Heart right ventricle (tissue), 16 donors: ENCODE measurements at regions of chr1 and their contacts with region 1.

Region 1: GRCh38 chr1:81808760-81809159 is 8.0 kb downstream of the ADGRL2 start:
- DNase-seq: no peak
- ATAC-seq: peak in 7 of 8 donors; percentile 20 to 65 (median 52)
- H3K4me3 ChIP-seq: peak overlapping the region in 8 of 10 donors; percentile 0 to 36 (median 27)
- H3K27ac ChIP-seq: peak overlapping the region in 6 of 10 donors; percentile 11 to 59 (median 41)
- H3K4me1 ChIP-seq: peaks cover 0 to 100% (median 74%) of the 10 kb centered on the region in 9 donors
- H3K27me3 ChIP-seq: peaks cover 0 to 8% (median 0%) of the 10 kb centered on the region in 7 donors
- CTCF ChIP-seq: peak in 5 of 9 donors; percentile 13 to 47 (median 29)

Region 2: DNA sequence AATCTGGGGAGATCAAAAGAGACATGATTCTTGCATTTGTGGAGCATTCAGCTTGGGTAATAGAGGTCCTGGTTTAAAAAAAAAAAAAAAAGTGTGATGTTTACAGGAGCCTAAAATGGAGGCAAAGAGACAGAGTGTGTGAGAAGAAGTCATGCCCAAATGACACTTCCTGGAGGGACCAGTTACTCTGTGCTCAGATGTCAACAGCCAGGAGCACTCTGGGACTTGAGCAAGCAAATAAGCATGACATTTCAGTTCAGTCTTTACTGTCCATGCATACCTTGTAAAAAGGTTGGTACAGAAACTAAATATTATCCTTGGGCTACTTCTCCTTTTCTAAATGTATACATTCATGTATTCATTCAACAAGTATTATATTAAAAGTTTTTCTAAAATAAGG is 33.2 kb before region 1 on chr1:
- intact Hi-C with region 1: no loop called
- DNase-seq: no peak
- ATAC-seq: no peak
- H3K4me3 ChIP-seq: no peak overlapping the region
- H3K27ac ChIP-seq: no peak overlapping the region
- H3K4me1 ChIP-seq: no peaks in the 10 kb centered on the region
- H3K27me3 ChIP-seq: no peaks in the 10 kb centered on the region
- CTCF ChIP-seq: no peak

Region 3: GRCh38 chr1:81937791-81938450 is 129.2 kb after region 1 on chr1:
- intact Hi-C with region 1: loop called in 2 of 10 experiments (anchors 5 to 10 kb)
- DNase-seq: no peak
- ATAC-seq: peak in 4 of 8 donors; percentile 49 to 84 (median 62)
- H3K4me3 ChIP-seq: no peak overlapping the region
- H3K27ac ChIP-seq: peak overlapping the region in 2 of 10 donors; percentile 7 to 18
- H3K4me1 ChIP-seq: peaks cover 0 to 29% (median 17%) of the 10 kb centered on the region in 9 donors
- H3K27me3 ChIP-seq: no peaks in the 10 kb centered on the region
- CTCF ChIP-seq: no peak

Region 4: GRCh38 chr1:81950591-81951244 is 142.0 kb after region 1 on chr1:
- intact Hi-C with region 1: loop called in 2 of 10 experiments (anchors 10 kb)
- DNase-seq: no peak
- ATAC-seq: no peak
- H3K4me3 ChIP-seq: peak overlapping the region in 3 of 10 donors; percentile 1 to 21 (median 8)
- H3K27ac ChIP-seq: no peak overlapping the region
- H3K4me1 ChIP-seq: peaks cover 0 to 33% (median 6%) of the 10 kb centered on the region in 9 donors
- H3K27me3 ChIP-seq: no peaks in the 10 kb centered on the region
- CTCF ChIP-seq: no peak

Region 5: GRCh38 chr1:81978945-81979344 is 170.2 kb after region 1 on chr1:
- intact Hi-C with region 1: loop called in 3 of 10 experiments (anchors 5 to 10 kb)
- DNase-seq: no peak
- ATAC-seq: no peak
- H3K4me3 ChIP-seq: no peak overlapping the region
- H3K27ac ChIP-seq: no peak overlapping the region
- H3K4me1 ChIP-seq: peaks cover 0 to 29% (median 6%) of the 10 kb centered on the region in 9 donors
- H3K27me3 ChIP-seq: no peaks in the 10 kb centered on the region
- CTCF ChIP-seq: no peak